ENCODE measurements at regions of chr22 and their contacts with region 1.

Region 1: DNA sequence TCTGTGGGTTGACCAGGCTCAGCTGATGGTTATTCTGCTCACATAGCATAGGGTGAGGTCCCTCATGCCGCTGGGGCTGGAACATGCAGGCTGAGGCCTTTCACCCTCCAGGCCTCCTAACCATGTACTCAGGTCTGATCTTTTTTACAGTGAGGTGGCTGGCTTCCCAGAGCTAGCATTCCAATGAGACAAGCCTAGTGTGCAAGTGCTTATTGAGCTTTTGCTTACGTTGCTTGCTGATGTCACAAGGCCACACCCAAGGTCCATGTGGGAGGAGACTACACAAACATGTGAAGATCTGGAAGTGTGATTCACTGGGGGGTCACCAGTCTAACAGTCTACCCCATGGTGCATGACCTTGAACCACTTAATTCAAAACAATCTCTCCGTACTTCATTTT is 33.9 kb downstream of the ISX start:
- DNase-seq: no peak
- ATAC-seq: no peak

Region 2: DNA sequence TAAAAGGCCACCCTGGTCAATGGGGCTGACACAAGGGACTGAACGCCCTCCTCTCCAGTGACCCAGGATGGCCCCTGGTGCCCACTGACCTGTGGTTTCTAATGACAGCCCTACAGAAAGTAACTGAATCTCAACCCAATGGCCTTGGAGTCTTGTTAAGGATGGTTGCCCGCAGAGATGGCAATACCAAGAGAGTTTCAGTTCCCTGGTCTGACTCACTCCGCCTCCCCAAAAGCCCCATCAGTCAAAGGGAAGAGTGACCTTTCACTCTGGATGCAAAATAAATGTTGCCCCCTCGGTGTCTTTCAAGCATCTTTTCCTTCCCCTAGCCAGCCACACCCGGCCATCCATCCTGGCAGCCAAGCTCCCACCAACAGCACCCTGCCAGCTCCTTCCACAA is 91.7 kb before region 1 on chr22:
- intact Hi-C with region 1: no loop called
- DNase-seq: no peak
- ATAC-seq: no peak

Region 3: GRCh38 chr22:35023692-35024363 is 76.1 kb before region 1 on chr22:
- intact Hi-C with region 1: loop called (anchors 2 kb)
- DNase-seq: peak; percentile 86
- ATAC-seq: peak; percentile 66